Aorta (tissue), 5 donors: ENCODE measurements at regions of chr7 and their contacts with region 1.

Region 1: DNA sequence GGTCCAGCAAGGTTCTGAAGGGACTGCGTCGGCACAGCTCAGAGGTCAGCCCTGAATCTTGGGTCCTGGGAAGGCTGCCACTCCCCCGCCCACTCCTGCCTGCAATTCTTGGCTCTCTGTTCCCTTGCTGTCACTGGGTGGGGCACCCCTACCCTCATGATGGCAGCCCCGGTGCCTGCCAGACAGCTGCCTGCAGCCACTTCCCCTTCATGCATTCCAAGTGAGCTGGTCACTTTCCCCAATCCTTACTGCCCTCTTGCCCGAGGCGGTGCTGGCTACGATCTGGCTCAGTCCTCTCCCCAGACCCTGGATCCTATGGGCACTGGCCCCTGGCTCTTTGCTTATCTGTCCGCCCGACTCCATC is 14.2 kb downstream of the MYL10 start:
- DNase-seq: peak; percentile 88 to 89
- ATAC-seq: peak; percentile 68
- H3K4me3 ChIP-seq: no peak overlapping the region
- H3K27ac ChIP-seq: peak overlapping the region; percentile 69 to 88
- H3K4me1 ChIP-seq: no peaks in the 10 kb centered on the region
- H3K27me3 ChIP-seq: no peaks in the 10 kb centered on the region

Region 2: DNA sequence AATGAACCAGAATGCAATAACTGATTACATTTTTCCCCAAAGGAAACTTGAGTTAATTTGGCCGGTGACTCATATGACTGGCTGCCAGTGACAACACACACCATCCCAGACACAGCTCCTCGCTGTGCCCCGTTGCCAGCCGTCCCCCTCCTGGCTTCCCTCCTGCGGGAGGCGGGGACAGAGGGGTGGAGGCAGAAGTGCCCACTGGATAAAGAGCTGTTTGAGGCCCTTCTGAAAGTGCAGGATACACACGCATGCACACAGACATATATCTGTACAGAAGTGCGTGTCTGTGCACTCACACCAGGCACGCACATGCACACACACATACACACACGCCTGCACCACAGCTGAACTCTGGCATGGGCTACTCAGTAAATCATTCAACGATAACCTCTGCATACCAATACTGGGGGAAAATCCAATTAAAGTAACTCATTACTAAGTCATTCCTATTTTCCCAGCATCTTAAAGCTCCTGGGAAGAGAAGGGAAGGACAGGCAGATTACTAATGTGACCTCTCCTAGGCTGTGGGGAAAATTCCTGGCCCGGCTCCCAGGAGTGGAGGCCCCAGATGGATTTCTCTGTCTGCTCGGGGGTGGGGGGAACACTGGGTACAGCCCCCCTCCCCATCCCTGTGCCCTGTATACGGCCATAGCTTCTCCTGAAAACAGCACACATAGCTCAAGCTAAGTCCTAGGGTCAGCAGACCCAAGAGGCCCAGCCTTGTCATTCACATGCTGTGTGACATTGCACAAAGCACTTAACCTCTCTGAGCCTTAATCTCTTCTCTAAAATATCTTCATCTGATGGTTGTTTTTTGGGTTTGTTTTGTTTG is 66.5 kb after region 1 on chr7:
- intact Hi-C with region 1: loop called in 1 of 2 experiments (anchors 5 kb)
- DNase-seq: peak; percentile 90 to 94
- ATAC-seq: peak; percentile 93
- H3K4me3 ChIP-seq: no peak overlapping the region
- H3K27ac ChIP-seq: no peak overlapping the region
- H3K4me1 ChIP-seq: no peaks in the 10 kb centered on the region
- H3K27me3 ChIP-seq: no peaks in the 10 kb centered on the region